ENCODE measurements at regions of chr6 and their contacts with region 1.

Region 1: GRCh38 chr6:18595774-18596530 is 208.8 kb downstream of the RNF144B start:
- DNase-seq: peak in 3 of 6 donors; percentile 21 to 65 (median 23)
- ATAC-seq: peak; percentile 56 to 94 (median 92)
- H3K4me3 ChIP-seq: no peak overlapping the region
- H3K27ac ChIP-seq: no peak overlapping the region
- H3K4me1 ChIP-seq: no peaks in the 10 kb centered on the region
- H3K27me3 ChIP-seq: no peaks in the 10 kb centered on the region
- CTCF ChIP-seq: peak; percentile 67 to 88 (median 88)

Region 2: GRCh38 chr6:18742406-18742805 is 146.5 kb after region 1 on chr6:
- intact Hi-C with region 1: no loop called
- DNase-seq: no peak
- ATAC-seq: no peak
- H3K4me3 ChIP-seq: no peak overlapping the region
- H3K27ac ChIP-seq: no peak overlapping the region
- H3K4me1 ChIP-seq: no peaks in the 10 kb centered on the region
- H3K27me3 ChIP-seq: peaks cover 0 to 4% (median 0%) of the 10 kb centered on the region in 4 donors
- CTCF ChIP-seq: no peak

Region 3: GRCh38 chr6:20056350-20056992 is 1460.5 kb after region 1 on chr6:
- intact Hi-C with region 1: loop called in 1 of 3 experiments (anchors 10 kb)
- DNase-seq: peak in 1 of 6 donors; percentile 25
- ATAC-seq: peak; percentile 60 to 78 (median 73)
- H3K4me3 ChIP-seq: no peak overlapping the region
- H3K27ac ChIP-seq: no peak overlapping the region
- H3K4me1 ChIP-seq: no peaks in the 10 kb centered on the region
- H3K27me3 ChIP-seq: no peaks in the 10 kb centered on the region
- CTCF ChIP-seq: peak in 3 of 4 donors; percentile 20 to 28 (median 27)